ENCODE measurements at regions of chr7 and their contacts with region 1.

Region 1: DNA sequence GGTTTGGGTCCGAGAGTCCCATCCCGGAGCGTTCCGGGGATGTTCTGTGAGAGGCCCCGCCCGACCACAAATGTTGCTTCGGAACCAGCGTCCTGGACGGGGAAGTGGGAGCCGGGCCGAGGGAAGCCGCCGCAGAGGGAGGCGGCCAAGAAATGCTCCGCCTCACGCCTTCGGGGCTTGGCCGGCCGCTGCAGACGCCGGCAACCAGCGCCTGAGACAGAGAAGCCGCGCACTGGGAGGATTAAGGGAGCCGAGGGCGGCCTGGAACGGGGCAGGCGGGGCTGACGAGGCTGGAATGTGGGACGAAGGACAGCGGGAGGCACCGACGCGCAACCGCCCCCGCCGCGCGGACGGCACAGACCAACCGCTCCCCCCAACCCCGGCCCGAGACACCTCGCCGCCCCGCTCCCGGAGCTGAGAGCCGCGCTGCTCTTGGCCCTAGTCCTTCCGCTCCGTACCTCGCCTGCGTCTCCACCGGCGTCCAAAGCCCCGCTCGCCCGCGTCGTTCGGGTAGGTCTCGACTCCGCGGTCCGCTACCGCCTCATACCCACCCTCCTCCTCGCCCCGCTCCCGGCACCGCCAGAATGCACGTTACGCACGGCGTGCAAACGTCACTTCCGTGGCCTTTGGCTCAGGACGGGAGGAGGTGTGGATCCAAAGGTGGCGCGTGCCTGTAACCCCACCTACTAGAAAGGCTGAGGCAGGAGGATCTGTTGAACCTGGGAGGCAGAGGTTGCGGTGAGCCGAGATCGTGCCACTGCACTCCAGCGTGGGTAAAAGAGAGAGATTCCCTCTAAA is 36.7 kb upstream of the KCTD7 start:
- DNase-seq: peak; percentile 95
- ATAC-seq: peak; percentile 99

Region 2: DNA sequence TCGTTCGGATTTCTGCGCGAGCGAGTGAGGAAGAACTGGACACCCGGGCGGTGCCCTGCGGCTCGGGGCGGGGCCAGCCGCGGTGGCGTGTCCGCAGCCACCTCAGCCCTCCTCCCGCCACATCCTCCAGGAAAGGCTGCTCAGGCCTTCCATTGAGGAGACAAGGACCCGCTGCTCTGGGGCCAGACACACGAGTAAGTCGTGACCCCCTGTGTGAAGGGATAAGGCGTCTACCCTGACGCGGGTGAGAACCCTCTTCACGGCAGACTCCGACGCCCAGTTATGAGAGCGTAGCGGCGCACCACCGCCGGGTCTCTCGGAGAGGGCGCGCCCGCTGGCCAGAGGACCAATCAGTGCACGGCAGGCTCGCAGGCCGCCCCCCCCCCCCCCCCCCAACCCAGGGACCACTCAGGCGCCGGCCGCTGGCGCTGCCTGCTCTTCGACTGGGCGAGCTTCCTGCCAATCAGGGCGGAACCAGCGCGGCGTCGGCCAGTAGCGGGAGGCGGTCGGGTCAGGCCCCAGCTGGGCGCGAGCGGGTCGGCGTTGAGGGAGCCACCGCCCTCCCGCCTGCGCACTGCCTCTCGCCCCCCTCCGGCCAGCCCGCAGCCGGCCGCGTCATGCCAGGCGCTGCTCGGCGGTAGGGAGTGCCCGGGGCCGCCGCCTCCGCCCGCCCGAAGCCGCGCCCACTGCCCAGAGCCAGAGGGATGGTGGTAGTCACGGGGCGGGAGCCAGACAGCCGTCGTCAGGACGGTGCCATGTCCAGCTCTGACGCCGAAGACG is 36.6 kb after region 1 on chr7 and contains the start of gene KCTD7:
- intact Hi-C with region 1: loop called (anchors 5 kb)
- DNase-seq: peak; percentile 99
- ATAC-seq: peak; percentile 95
- total RNA-seq, gene KCTD7: 8.0 TPM